T-cell (primary cell): ENCODE measurements at regions of chr6 and their contacts with region 1.

Region 1: DNA sequence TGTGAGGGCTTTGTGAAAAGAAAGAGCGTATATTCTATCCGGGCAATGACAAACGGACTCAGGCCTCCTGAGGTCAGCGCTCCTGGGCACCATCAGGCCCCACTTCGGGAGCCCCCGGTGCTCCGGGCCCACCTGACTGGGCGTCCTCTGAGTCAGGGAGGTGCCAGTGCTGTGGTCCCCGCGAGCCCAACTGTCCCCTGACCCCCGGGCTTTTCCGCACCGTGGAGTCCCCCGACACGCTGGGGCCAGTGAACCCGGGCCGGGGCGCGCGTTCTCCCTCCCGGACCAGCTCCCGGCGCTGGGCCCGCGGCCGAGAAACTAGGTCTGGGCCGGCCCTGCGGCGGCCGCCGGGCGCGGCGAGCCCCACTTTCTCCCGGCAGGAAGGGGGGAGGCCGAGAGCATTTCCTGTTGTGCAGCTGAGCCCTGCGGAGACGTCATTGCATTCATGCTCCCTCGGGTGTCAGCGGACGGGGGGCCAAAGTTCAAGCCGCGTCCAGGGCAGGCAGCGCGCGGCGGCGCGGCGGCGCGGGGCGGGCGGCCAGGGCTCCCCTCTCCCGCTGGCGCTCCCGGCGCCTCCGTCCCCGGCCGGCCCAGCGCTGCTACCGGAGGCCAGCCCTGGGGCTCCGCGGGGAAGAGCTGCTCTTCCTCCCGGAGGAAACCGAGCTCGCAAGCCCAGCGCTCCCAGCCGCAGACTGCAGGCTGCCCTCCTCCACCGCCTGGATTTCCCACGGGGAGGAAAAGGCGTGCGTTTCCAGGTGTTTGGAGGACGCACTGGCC is 18.3 kb downstream of the HIVEP2 start:
- DNase-seq: peak; percentile 52 to 90 (median 81)
- ATAC-seq: peak; percentile 83 to 89 (median 85)
- H3K4me3 ChIP-seq: peak overlapping the region; percentile 92 to 99
- H3K4me3 Mint-ChIP-seq: peak overlapping the region; percentile 88 to 96 (median 91)
- H3K27ac ChIP-seq: peak overlapping the region; percentile 97
- H3K27ac Mint-ChIP-seq: peak overlapping the region; percentile 95 to 98
- H3K4me1 ChIP-seq: peaks cover 5 to 47% of the 10 kb centered on the region in 2 experiments
- H3K4me1 Mint-ChIP-seq: peaks cover 53 to 70% (median 65%) of the 10 kb centered on the region in 3 donors
- H3K27me3 ChIP-seq: no peaks in the 10 kb centered on the region
- H3K27me3 Mint-ChIP-seq: no peaks in the 10 kb centered on the region

Region 2: DNA sequence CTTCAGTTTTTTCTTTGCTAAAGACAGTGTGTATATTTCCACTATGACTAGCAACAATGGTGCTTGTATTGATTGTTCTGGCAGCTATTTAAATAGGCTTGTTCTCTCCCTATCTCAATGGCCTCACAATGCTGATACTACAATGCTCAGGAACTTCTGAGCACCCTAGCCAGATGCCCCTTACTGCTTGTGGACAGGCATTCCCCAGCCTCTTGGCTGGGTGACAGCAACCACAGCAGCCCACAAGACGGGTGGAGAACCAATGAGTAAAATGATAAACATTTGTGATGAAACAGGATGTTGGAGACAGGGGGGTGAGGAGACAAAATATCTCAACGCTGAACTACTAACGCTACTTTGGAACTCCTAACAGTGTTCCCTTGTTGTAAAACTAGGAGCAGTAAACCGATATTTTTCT is 24.0 kb before region 1 on chr6:
- CTCF ChIA-PET with region 1: interaction called, 3 to 6 read pairs
- POLR2A ChIA-PET with region 1: interaction called, 5 to 13 read pairs
- DNase-seq: peak; percentile 62 to 91 (median 81)
- ATAC-seq: peak; percentile 68 to 79 (median 76)
- H3K4me3 ChIP-seq: peak overlapping the region; percentile 23 to 36
- H3K4me3 Mint-ChIP-seq: peak overlapping the region in 2 of 3 donors; percentile 71 to 76
- H3K27ac ChIP-seq: peak overlapping the region; percentile 97
- H3K27ac Mint-ChIP-seq: no peak overlapping the region
- H3K4me1 ChIP-seq: peaks cover 50 to 61% of the 10 kb centered on the region in 2 experiments
- H3K4me1 Mint-ChIP-seq: peaks cover 14 to 54% (median 17%) of the 10 kb centered on the region in 3 donors
- H3K27me3 ChIP-seq: no peaks in the 10 kb centered on the region
- H3K27me3 Mint-ChIP-seq: no peaks in the 10 kb centered on the region

Region 3: GRCh38 chr6:142946181-142946923 is 19.7 kb after region 1 on chr6:
- CTCF ChIA-PET with region 1: interaction called, 4 to 20 read pairs
- POLR2A ChIA-PET with region 1: interaction called, 5 to 7 read pairs
- DNase-seq: peak; percentile 68 to 97 (median 94)
- ATAC-seq: peak; percentile 40 to 56 (median 44)
- H3K4me3 ChIP-seq: peak overlapping the region; percentile 95 to 98
- H3K4me3 Mint-ChIP-seq: peak overlapping the region; percentile 91 to 93 (median 92)
- H3K27ac ChIP-seq: peak overlapping the region; percentile 100
- H3K27ac Mint-ChIP-seq: peak overlapping the region; percentile 94 to 95
- H3K4me1 ChIP-seq: peaks cover 14 to 19% of the 10 kb centered on the region in 2 experiments
- H3K4me1 Mint-ChIP-seq: peaks cover 34 to 37% (median 35%) of the 10 kb centered on the region in 3 donors
- H3K27me3 ChIP-seq: no peaks in the 10 kb centered on the region
- H3K27me3 Mint-ChIP-seq: no peaks in the 10 kb centered on the region

Region 4: GRCh38 chr6:143457563-143458359 is 531.1 kb after region 1 on chr6:
- CTCF ChIA-PET with region 1: no interaction called
- POLR2A ChIA-PET with region 1: no interaction called
- DNase-seq: no peak
- ATAC-seq: no peak
- H3K4me3 ChIP-seq: no peak overlapping the region
- H3K4me3 Mint-ChIP-seq: no peak overlapping the region
- H3K27ac ChIP-seq: no peak overlapping the region
- H3K27ac Mint-ChIP-seq: no peak overlapping the region
- H3K4me1 ChIP-seq: no peaks in the 10 kb centered on the region
- H3K4me1 Mint-ChIP-seq: peaks cover 28 to 42% (median 32%) of the 10 kb centered on the region in 3 donors
- H3K27me3 ChIP-seq: no peaks in the 10 kb centered on the region
- H3K27me3 Mint-ChIP-seq: no peaks in the 10 kb centered on the region